Common myeloid progenitor, CD34-positive (primary cell): ENCODE measurements at regions of chr10 and their contacts with region 1.

Region 1: DNA sequence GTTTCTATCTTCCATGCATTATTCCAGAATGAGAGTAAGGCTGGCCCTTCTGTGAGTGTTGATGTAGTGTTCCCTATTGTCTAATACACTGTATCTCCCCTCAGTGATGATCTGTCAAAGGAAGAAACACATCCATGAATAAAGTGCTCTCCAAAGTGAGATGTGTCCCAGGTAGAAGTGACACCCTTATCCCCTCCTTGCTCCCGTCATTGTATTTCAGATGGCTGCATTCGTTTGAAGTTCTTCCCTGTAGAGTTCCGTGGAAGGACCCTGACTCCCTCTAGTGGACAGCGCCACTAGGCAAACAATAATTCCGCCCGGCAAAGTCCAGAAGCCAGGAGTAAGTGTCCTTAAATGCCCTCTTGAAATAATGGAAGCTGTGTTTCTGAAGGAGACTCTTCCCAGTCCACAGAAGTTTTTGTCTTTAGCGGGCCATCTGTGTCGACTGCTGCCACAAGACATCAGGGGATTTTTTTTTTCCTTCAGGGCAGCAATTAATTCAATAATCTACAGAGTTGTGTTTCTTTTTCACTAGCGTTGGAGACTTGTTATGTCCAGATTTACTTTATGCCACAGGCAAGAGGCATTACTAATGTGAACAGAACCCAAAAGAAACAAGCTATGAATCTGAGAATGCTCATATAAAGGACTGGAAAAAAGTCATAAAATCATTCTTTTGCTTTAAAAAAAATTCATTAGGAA is 64.6 kb downstream of the THNSL1 start:
- DNase-seq: peak; percentile 71 to 76 (median 72)
- H3K4me3 ChIP-seq: no peak overlapping the region
- H3K27ac ChIP-seq: no peak overlapping the region
- H3K4me1 ChIP-seq: peaks cover 0 to 7% (median 0%) of the 10 kb centered on the region in 4 experiments
- H3K27me3 ChIP-seq: peaks cover 0 to 2% (median 0%) of the 10 kb centered on the region in 5 experiments

Region 2: DNA sequence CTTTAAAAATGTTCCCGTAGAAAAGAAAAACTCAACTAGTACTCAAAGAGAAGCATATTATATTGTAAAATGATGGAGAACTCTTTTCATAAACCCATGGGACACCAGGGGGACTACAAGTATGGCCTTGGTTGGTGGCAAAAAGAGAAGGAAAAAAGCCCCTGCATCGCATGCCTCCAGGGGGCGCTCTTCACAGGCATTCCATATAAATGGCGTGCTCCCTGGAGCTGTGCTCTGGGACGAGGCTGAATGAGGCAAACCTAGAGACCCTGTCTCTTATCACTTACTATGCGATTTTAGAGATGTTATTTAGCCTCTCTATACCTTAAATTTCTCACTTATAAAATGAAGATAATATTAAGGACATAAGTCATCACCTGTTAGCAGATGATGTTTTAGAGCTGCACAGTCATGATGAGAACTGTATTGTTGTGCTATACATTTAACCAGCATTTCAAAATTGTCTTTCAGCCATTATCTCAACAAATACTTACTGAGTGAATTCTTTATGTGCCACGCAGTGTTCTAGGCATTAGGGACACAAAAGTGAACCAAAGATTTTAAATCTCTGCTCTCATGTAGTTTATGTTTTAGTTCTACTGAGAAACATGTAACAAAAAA is 463.1 kb before region 1 on chr10:
- CTCF ChIA-PET with region 1: interaction called, 12 read pairs
- POLR2A ChIA-PET with region 1: no interaction called
- DNase-seq: peak; percentile 70 to 73 (median 72)
- H3K4me3 ChIP-seq: no peak overlapping the region
- H3K27ac ChIP-seq: no peak overlapping the region
- H3K4me1 ChIP-seq: peaks cover 0 to 3% (median 1%) of the 10 kb centered on the region in 4 experiments
- H3K27me3 ChIP-seq: no peaks in the 10 kb centered on the region

Region 3: GRCh38 chr10:24642622-24643417 is 438.2 kb before region 1 on chr10:
- CTCF ChIA-PET with region 1: interaction called, 17 read pairs
- POLR2A ChIA-PET with region 1: no interaction called
- DNase-seq: peak; percentile 65 to 75 (median 69)
- H3K4me3 ChIP-seq: no peak overlapping the region
- H3K27ac ChIP-seq: no peak overlapping the region
- H3K4me1 ChIP-seq: peaks cover 0 to 3% (median 1%) of the 10 kb centered on the region in 4 experiments
- H3K27me3 ChIP-seq: no peaks in the 10 kb centered on the region

Region 4: DNA sequence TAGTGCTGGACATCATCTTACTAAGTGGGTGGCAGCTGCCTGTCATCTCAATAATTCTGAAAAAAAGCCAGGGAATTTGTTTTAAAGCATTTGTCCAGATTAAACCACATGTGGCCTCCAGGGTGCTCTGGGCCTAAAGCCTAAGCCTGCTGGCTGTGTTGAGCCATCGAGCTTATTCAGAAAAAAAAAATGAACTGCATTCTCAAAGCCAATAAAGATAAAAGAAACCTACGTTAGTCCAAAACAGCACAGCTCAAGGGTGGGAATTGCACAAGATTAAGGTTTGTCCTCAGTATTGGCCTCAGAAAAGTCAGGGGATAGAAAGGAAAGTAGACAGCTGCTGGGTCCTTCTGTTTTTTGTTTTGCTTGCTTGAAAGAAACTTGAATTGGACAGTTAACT is 106.1 kb before region 1 on chr10:
- CTCF ChIA-PET with region 1: no interaction called
- POLR2A ChIA-PET with region 1: no interaction called
- DNase-seq: no peak
- H3K4me3 ChIP-seq: no peak overlapping the region
- H3K27ac ChIP-seq: no peak overlapping the region
- H3K4me1 ChIP-seq: no peaks in the 10 kb centered on the region
- H3K27me3 ChIP-seq: no peaks in the 10 kb centered on the region

Region 5: DNA sequence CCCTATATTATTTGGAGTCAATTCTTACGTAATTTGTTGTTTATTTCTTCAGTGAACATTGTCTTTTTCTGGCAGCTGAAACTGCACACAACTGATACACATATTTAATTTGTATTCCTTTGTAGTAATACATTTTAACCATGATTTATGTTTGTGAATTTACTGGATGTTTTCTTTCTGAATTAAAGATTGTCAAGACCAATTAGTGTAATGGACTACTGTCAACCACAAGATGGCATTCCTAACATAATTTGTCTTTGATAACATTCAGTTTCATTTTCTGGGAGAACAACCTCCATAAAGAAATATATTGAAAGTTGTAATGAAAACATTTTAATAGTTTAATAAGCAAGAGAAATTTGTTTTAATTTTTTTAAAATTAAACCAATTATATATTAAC is 54.6 kb before region 1 on chr10:
- CTCF ChIA-PET with region 1: interaction called, 14 read pairs
- POLR2A ChIA-PET with region 1: no interaction called
- DNase-seq: peak; percentile 18 to 32 (median 27)
- H3K4me3 ChIP-seq: no peak overlapping the region
- H3K27ac ChIP-seq: no peak overlapping the region
- H3K4me1 ChIP-seq: peaks cover 0 to 7% (median 3%) of the 10 kb centered on the region in 4 experiments
- H3K27me3 ChIP-seq: no peaks in the 10 kb centered on the region

Region 6: GRCh38 chr10:25068152-25069058 is 12.6 kb before region 1 on chr10:
- CTCF ChIA-PET with region 1: interaction called, 11 read pairs
- POLR2A ChIA-PET with region 1: no interaction called
- DNase-seq: no peak
- H3K4me3 ChIP-seq: no peak overlapping the region
- H3K27ac ChIP-seq: no peak overlapping the region
- H3K4me1 ChIP-seq: no peaks in the 10 kb centered on the region
- H3K27me3 ChIP-seq: no peaks in the 10 kb centered on the region

Region 7: GRCh38 chr10:25113191-25114035 is 32.4 kb after region 1 on chr10:
- CTCF ChIA-PET with region 1: no interaction called
- POLR2A ChIA-PET with region 1: no interaction called
- DNase-seq: peak; percentile 28 to 61 (median 53)
- H3K4me3 ChIP-seq: no peak overlapping the region
- H3K27ac ChIP-seq: no peak overlapping the region
- H3K4me1 ChIP-seq: no peaks in the 10 kb centered on the region
- H3K27me3 ChIP-seq: peaks cover 0 to 16% (median 2%) of the 10 kb centered on the region in 5 experiments